Body of pancreas (tissue), 4 donors: ENCODE measurements at regions of chr4 and their contacts with region 1.

Region 1: GRCh38 chr4:170853422-170854021 is 763.8 kb upstream of the AADAT start:
- DNase-seq: peak; percentile 52 to 65 (median 61)
- ATAC-seq: peak; percentile 77
- H3K4me3 ChIP-seq: no peak overlapping the region
- H3K27ac ChIP-seq: no peak overlapping the region
- H3K4me1 ChIP-seq: no peaks in the 10 kb centered on the region
- H3K27me3 ChIP-seq: no peaks in the 10 kb centered on the region
- CTCF ChIP-seq: peak; percentile 39 to 80 (median 68)
- POLR2A ChIP-seq: no peak

Region 2: DNA sequence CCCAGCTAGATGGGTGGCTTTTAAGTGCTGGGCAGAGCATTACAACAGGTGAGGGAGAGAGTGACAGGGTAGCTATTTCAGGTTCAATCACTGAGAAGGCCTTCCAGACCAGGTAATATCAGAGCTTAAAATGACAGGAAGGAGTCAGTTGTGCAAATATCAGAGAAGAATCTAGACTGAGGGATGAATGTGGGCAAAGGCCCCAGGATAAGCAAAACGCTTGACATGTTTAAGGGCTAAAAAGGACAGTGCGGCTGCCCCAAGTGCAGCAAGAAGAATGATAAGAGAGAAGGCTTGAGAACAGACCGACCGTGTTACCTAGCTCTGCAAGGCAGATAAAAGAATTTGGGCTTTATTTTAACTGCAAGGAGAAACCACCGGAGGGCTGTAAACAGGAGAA is 782.3 kb before region 1 on chr4:
- intact Hi-C with region 1: no loop called
- DNase-seq: no peak
- ATAC-seq: no peak
- H3K4me3 ChIP-seq: no peak overlapping the region
- H3K27ac ChIP-seq: no peak overlapping the region
- H3K4me1 ChIP-seq: no peaks in the 10 kb centered on the region
- H3K27me3 ChIP-seq: no peaks in the 10 kb centered on the region
- CTCF ChIP-seq: no peak
- POLR2A ChIP-seq: no peak

Region 3: GRCh38 chr4:170259631-170260153 is 593.8 kb before region 1 on chr4:
- intact Hi-C with region 1: loop called (anchors 10 kb)
- DNase-seq: peak; percentile 81 to 88 (median 84)
- ATAC-seq: peak; percentile 98
- H3K4me3 ChIP-seq: no peak overlapping the region
- H3K27ac ChIP-seq: no peak overlapping the region
- H3K4me1 ChIP-seq: no peaks in the 10 kb centered on the region
- H3K27me3 ChIP-seq: no peaks in the 10 kb centered on the region
- CTCF ChIP-seq: peak; percentile 28 to 97 (median 79)
- POLR2A ChIP-seq: no peak